ENCODE measurements at regions of chr17 and their contacts with region 1.

Region 1: DNA sequence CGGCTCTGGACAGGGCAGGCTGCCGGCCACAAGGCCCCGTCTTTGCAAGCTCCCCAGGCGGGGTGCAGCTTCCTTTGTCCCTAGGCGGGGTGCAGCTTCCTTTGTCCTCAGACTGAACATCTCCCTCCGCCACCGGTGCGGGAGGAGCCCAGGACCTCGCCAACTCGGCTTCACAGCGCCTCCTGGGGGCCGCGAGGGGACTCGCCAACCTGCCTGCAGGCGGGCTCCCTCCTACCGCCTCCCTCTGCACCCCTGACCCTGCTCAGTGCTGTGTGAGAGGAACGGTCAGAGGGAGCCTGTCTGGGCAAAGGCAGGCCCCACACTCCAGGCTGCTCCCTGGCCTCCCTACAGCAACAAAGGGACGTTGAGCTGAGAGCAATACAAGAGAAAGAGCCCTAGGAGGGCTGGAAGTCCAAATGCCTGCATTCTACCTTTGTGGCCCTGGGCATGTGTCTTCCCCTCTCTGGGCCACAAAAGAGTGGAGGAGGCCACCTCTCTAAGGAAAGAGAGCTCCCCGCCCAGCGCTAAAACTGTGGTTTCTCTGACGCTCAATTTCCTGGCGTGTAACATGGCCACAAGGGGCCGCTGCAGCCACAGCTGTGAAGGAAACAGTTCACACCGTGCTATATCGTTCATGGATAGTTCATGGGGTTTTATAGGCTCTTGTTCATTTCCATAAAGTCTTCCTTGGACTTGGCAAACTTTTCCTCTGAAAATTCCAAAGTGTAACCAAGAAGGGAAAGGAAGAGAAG is 20.9 kb upstream of the KRT19 start:
- DNase-seq: peak; percentile 72 to 87 (median 82)
- ATAC-seq: peak; percentile 94
- H3K4me3 ChIP-seq: peak overlapping the region; percentile 43
- H3K4me3 Mint-ChIP-seq: peak overlapping the region; percentile 48 to 77 (median 68)
- H3K27ac ChIP-seq: peak overlapping the region; percentile 37
- H3K27ac Mint-ChIP-seq: peak overlapping the region; percentile 13 to 85 (median 73)
- H3K4me1 ChIP-seq: peaks cover 10 to 17% of the 10 kb centered on the region in 2 donors
- H3K4me1 Mint-ChIP-seq: peaks cover 8 to 18% (median 14%) of the 10 kb centered on the region in 7 donors
- H3K27me3 ChIP-seq: no peaks in the 10 kb centered on the region
- H3K27me3 Mint-ChIP-seq: peaks cover 0 to 13% (median 8%) of the 10 kb centered on the region in 5 donors

Region 2: GRCh38 chr17:40803617-40804082 is 745.4 kb before region 1 on chr17:
- CTCF ChIA-PET with region 1: no interaction called
- POLR2A ChIA-PET with region 1: no interaction called
- intact Hi-C with region 1: loop called in 1 of 2 experiments (anchors 1 kb)
- DNase-seq: peak; percentile 34 to 74 (median 54)
- ATAC-seq: peak; percentile 90
- H3K4me3 ChIP-seq: no peak overlapping the region
- H3K4me3 Mint-ChIP-seq: peak overlapping the region in 1 of 10 donors; percentile 33
- H3K27ac ChIP-seq: no peak overlapping the region
- H3K27ac Mint-ChIP-seq: no peak overlapping the region
- H3K4me1 ChIP-seq: no peaks in the 10 kb centered on the region
- H3K4me1 Mint-ChIP-seq: peaks cover 0 to 4% (median 3%) of the 10 kb centered on the region in 7 donors
- H3K27me3 ChIP-seq: peaks cover 0 to 4% of the 10 kb centered on the region in 2 donors
- H3K27me3 Mint-ChIP-seq: peaks cover 33 to 51% (median 48%) of the 10 kb centered on the region in 5 donors

Region 3: GRCh38 chr17:40909351-40909750 is 639.7 kb before region 1 on chr17:
- CTCF ChIA-PET with region 1: interaction called, 31 read pairs
- POLR2A ChIA-PET with region 1: no interaction called
- intact Hi-C with region 1: loop called (anchors 1 kb)
- DNase-seq: peak; percentile 29 to 70 (median 56)
- ATAC-seq: peak; percentile 93
- H3K4me3 ChIP-seq: no peak overlapping the region
- H3K4me3 Mint-ChIP-seq: no peak overlapping the region
- H3K27ac ChIP-seq: no peak overlapping the region
- H3K27ac Mint-ChIP-seq: no peak overlapping the region
- H3K4me1 ChIP-seq: no peaks in the 10 kb centered on the region
- H3K4me1 Mint-ChIP-seq: no peaks in the 10 kb centered on the region
- H3K27me3 ChIP-seq: peaks cover 5 to 7% of the 10 kb centered on the region in 2 donors
- H3K27me3 Mint-ChIP-seq: peaks cover 26 to 45% (median 36%) of the 10 kb centered on the region in 5 donors

Region 4: DNA sequence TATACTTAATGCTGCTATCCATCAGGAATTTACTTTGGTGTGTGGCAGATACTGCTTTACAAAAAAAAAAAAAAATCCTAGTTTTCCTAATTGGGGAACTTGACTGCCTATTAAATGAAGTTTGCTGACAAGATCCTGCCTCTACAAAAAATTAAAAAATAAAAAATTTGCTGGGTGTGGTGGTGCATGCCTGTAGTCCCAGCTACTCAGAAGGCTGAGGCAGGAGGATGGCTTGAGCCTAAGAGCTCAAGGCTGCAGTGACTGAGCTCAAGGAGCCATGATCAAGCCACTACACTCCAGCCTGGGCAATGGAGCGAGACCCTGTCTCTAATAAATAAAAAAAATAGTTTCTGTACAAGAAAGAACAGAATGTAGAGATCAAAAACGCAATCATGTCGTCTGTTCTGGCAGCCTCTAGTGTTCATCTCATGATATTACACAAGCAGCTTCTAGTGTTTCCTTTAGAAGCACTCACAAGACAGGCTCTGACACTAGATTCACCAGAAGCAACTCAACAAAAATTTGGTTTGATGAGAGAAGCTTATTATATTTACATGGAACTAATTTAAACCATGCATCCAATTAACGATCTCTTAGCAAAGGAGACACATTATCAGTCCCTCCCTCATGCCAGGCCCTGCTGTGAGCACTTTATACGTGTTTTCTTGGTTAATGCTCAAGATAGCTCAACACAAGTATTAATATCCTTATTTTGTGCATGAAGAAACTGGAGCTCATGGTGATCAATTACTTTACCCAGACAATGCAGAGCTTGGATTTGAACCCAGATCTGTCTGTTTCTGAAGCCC is 226.7 kb before region 1 on chr17:
- CTCF ChIA-PET with region 1: interaction called, 13 read pairs
- POLR2A ChIA-PET with region 1: no interaction called
- intact Hi-C with region 1: loop called in 1 of 2 experiments (anchors 1 kb)
- DNase-seq: peak in 7 of 9 donors; percentile 50 to 75 (median 60)
- ATAC-seq: peak; percentile 81
- H3K4me3 ChIP-seq: no peak overlapping the region
- H3K4me3 Mint-ChIP-seq: peak overlapping the region in 2 of 10 donors; percentile 25 to 27
- H3K27ac ChIP-seq: no peak overlapping the region
- H3K27ac Mint-ChIP-seq: peak overlapping the region; percentile 34 to 87 (median 77)
- H3K4me1 ChIP-seq: peaks cover 26 to 44% of the 10 kb centered on the region in 2 donors
- H3K4me1 Mint-ChIP-seq: peaks cover 11 to 59% (median 50%) of the 10 kb centered on the region in 7 donors
- H3K27me3 ChIP-seq: no peaks in the 10 kb centered on the region
- H3K27me3 Mint-ChIP-seq: no peaks in the 10 kb centered on the region

Region 5: DNA sequence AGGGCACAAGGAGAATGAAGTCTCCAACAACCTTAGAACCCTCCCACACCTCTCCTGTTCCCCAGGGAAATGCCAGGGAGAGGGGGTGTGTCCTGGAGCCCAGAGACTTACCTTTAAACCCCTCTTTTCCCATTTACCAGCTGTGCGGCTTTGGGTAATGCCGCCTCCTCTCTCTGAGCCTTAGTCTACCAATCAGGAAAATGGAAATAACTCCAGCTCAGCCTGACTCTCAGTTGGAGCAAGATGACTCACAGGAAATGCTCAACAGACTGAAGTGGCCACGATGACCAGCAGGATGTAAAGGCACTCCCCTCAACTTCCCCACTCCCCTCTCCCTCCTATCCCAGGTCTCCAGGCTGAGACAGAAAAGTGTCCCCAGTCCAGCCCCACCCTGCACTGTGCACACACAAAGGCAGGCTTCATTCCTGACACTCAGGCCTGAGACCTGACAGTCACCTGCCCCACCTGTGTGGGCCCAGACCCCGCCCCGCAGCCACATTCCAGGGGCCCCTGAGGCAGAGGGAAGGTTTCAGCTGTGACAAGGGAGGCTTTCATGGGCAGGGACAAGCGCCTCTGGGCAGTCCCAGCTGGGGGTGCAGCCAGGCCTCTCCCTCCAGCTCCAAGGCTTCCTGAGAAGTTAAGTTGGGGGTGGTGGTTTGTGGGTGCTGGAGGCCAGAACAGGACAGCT is 27.3 kb before region 1 on chr17:
- CTCF ChIA-PET with region 1: no interaction called
- POLR2A ChIA-PET with region 1: no interaction called
- intact Hi-C with region 1: no loop called
- DNase-seq: no peak
- ATAC-seq: no peak
- H3K4me3 ChIP-seq: no peak overlapping the region
- H3K4me3 Mint-ChIP-seq: no peak overlapping the region
- H3K27ac ChIP-seq: no peak overlapping the region
- H3K27ac Mint-ChIP-seq: no peak overlapping the region
- H3K4me1 ChIP-seq: no peaks in the 10 kb centered on the region
- H3K4me1 Mint-ChIP-seq: peaks cover 0 to 3% (median 0%) of the 10 kb centered on the region in 7 donors
- H3K27me3 ChIP-seq: peaks cover 0 to under 1% of the 10 kb centered on the region in 2 donors
- H3K27me3 Mint-ChIP-seq: peaks cover under 1 to 12% (median 1%) of the 10 kb centered on the region in 5 donors

Region 6: DNA sequence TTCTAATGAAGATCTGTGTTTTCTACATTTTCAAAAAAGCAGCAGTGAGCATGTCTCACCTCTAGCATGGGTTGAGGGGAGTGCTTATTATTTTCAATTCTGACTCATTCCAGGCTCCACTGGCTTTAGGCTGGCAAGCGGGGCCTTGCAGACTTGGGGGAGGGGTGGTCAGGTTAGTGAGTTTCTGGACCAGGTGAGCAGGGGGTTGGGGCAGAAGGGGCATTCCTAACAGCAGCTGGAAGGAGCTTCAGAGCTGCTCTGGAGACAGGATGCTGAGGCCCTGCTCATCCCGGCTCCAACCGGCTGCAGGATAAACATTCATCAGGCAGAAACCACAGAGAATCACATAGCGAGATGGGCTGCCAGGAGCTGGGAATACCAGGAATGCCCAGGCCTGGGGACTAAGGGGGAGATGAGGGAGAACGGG is 10.4 kb before region 1 on chr17:
- CTCF ChIA-PET with region 1: interaction called, 14 read pairs
- POLR2A ChIA-PET with region 1: no interaction called
- intact Hi-C with region 1: no loop called
- DNase-seq: no peak
- ATAC-seq: no peak
- H3K4me3 ChIP-seq: no peak overlapping the region
- H3K4me3 Mint-ChIP-seq: no peak overlapping the region
- H3K27ac ChIP-seq: no peak overlapping the region
- H3K27ac Mint-ChIP-seq: no peak overlapping the region
- H3K4me1 ChIP-seq: no peaks in the 10 kb centered on the region
- H3K4me1 Mint-ChIP-seq: no peaks in the 10 kb centered on the region
- H3K27me3 ChIP-seq: no peaks in the 10 kb centered on the region
- H3K27me3 Mint-ChIP-seq: peaks cover 0 to 17% (median 10%) of the 10 kb centered on the region in 5 donors

Region 7: GRCh38 chr17:41567317-41567716 is 18.3 kb after region 1 on chr17:
- CTCF ChIA-PET with region 1: interaction called, 16 read pairs
- POLR2A ChIA-PET with region 1: no interaction called
- intact Hi-C with region 1: no loop called
- DNase-seq: peak in 4 of 9 donors; percentile 8 to 14 (median 10)
- ATAC-seq: no peak
- H3K4me3 ChIP-seq: no peak overlapping the region
- H3K4me3 Mint-ChIP-seq: peak overlapping the region in 3 of 10 donors; percentile 5 to 24 (median 13)
- H3K27ac ChIP-seq: peak overlapping the region; percentile 17
- H3K27ac Mint-ChIP-seq: peak overlapping the region; percentile 17 to 87 (median 66)
- H3K4me1 ChIP-seq: peaks cover 0 to 7% of the 10 kb centered on the region in 2 donors
- H3K4me1 Mint-ChIP-seq: peaks cover 5 to 27% (median 20%) of the 10 kb centered on the region in 7 donors
- H3K27me3 ChIP-seq: no peaks in the 10 kb centered on the region
- H3K27me3 Mint-ChIP-seq: peaks cover 6 to 32% (median 16%) of the 10 kb centered on the region in 5 donors

Region 8: GRCh38 chr17:41648411-41649195 is 99.6 kb after region 1 on chr17:
- CTCF ChIA-PET with region 1: interaction called, 45 read pairs
- POLR2A ChIA-PET with region 1: no interaction called
- intact Hi-C with region 1: loop called (anchors 1 kb)
- DNase-seq: peak; percentile 70 to 93 (median 83)
- ATAC-seq: peak; percentile 93
- H3K4me3 ChIP-seq: peak overlapping the region; percentile 87
- H3K4me3 Mint-ChIP-seq: peak overlapping the region in 9 of 10 donors; percentile 63 to 86 (median 81)
- H3K27ac ChIP-seq: peak overlapping the region; percentile 24
- H3K27ac Mint-ChIP-seq: peak overlapping the region in 7 of 9 donors; percentile 28 to 82 (median 77)
- H3K4me1 ChIP-seq: peaks cover 8 to 12% of the 10 kb centered on the region in 2 donors
- H3K4me1 Mint-ChIP-seq: peaks cover 6 to 14% (median 9%) of the 10 kb centered on the region in 7 donors
- H3K27me3 ChIP-seq: no peaks in the 10 kb centered on the region
- H3K27me3 Mint-ChIP-seq: no peaks in the 10 kb centered on the region

Measured in naive thymus-derived CD4-positive, alpha-beta T cell (primary cell).